T-cell (primary cell): ENCODE measurements at regions of chr14 and their contacts with region 1.

Region 1: GRCh38 chr14:73467377-73467776 is 9.0 kb upstream of the NUMB start:
- DNase-seq: peak in 1 of 35 experiments; percentile 16
- ATAC-seq: no peak
- H3K4me3 ChIP-seq: no peak overlapping the region
- H3K4me3 Mint-ChIP-seq: no peak overlapping the region
- H3K27ac ChIP-seq: no peak overlapping the region
- H3K27ac Mint-ChIP-seq: peak overlapping the region in 1 of 2 donors; percentile 28
- H3K4me1 ChIP-seq: peaks cover 5 to 11% of the 10 kb centered on the region in 2 experiments
- H3K4me1 Mint-ChIP-seq: peaks cover 20 to 39% (median 28%) of the 10 kb centered on the region in 3 donors
- H3K27me3 ChIP-seq: no peaks in the 10 kb centered on the region
- H3K27me3 Mint-ChIP-seq: no peaks in the 10 kb centered on the region

Region 2: GRCh38 chr14:73198253-73198652 is 269.1 kb before region 1 on chr14:
- CTCF ChIA-PET with region 1: interaction called in 1 of 2 experiments, 11 read pairs
- POLR2A ChIA-PET with region 1: no interaction called
- DNase-seq: no peak
- ATAC-seq: no peak
- H3K4me3 ChIP-seq: no peak overlapping the region
- H3K4me3 Mint-ChIP-seq: no peak overlapping the region
- H3K27ac ChIP-seq: no peak overlapping the region
- H3K27ac Mint-ChIP-seq: no peak overlapping the region
- H3K4me1 ChIP-seq: no peaks in the 10 kb centered on the region
- H3K4me1 Mint-ChIP-seq: no peaks in the 10 kb centered on the region
- H3K27me3 ChIP-seq: no peaks in the 10 kb centered on the region
- H3K27me3 Mint-ChIP-seq: no peaks in the 10 kb centered on the region

Region 3: GRCh38 chr14:73403181-73403752 is 64.1 kb before region 1 on chr14:
- CTCF ChIA-PET with region 1: no interaction called
- POLR2A ChIA-PET with region 1: interaction called in 1 of 2 experiments, 14 read pairs
- DNase-seq: no peak
- ATAC-seq: no peak
- H3K4me3 ChIP-seq: no peak overlapping the region
- H3K4me3 Mint-ChIP-seq: no peak overlapping the region
- H3K27ac ChIP-seq: no peak overlapping the region
- H3K27ac Mint-ChIP-seq: no peak overlapping the region
- H3K4me1 ChIP-seq: no peaks in the 10 kb centered on the region
- H3K4me1 Mint-ChIP-seq: peaks cover 8 to 20% (median 8%) of the 10 kb centered on the region in 3 donors
- H3K27me3 ChIP-seq: no peaks in the 10 kb centered on the region
- H3K27me3 Mint-ChIP-seq: no peaks in the 10 kb centered on the region